ENCODE measurements at regions of chr4 and their contacts with region 1.

Region 1: GRCh38 chr4:173168396-173169177 is at the start of gene GALNT7:
- DNase-seq: no peak
- ATAC-seq: peak; percentile 74
- H3K4me3 ChIP-seq: peak within 1 kb of the TSS; percentile 75 to 78
- H3K27ac ChIP-seq: peak within 1 kb of the TSS; percentile 98
- H3K4me1 ChIP-seq: peaks cover 34% of the 10 kb centered on the region
- H3K27me3 ChIP-seq: no peaks in the 10 kb centered on the region
- CTCF ChIP-seq: no peak
- total RNA-seq, gene GALNT7: 156 TPM

Region 2: DNA sequence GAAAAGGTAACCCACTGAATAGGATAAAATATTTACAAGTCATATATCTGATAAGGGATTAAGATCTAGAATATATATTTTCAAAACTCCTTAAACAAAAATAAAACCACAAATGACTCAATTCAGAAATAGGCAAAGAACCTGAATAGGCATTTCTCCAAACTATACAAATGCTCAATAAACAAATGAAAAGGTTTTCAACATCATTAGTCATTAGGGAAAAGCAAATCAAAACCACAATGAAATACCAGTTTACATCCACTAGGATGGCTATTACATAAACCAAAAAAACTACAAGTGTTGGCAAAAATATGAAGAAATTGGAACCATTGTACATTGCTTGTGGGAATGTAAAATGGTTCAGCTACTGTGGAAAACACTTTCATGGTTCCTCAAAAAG is 167.0 kb before region 1 on chr4:
- CTCF ChIA-PET with region 1: no interaction called
- POLR2A ChIA-PET with region 1: no interaction called
- in situ Hi-C with region 1: no loop called
- intact Hi-C with region 1: no loop called
- DNase-seq: no peak
- ATAC-seq: no peak
- H3K4me3 ChIP-seq: no peak overlapping the region
- H3K27ac ChIP-seq: no peak overlapping the region
- H3K4me1 ChIP-seq: no peaks in the 10 kb centered on the region
- H3K27me3 ChIP-seq: no peaks in the 10 kb centered on the region
- CTCF ChIP-seq: no peak

Region 3: DNA sequence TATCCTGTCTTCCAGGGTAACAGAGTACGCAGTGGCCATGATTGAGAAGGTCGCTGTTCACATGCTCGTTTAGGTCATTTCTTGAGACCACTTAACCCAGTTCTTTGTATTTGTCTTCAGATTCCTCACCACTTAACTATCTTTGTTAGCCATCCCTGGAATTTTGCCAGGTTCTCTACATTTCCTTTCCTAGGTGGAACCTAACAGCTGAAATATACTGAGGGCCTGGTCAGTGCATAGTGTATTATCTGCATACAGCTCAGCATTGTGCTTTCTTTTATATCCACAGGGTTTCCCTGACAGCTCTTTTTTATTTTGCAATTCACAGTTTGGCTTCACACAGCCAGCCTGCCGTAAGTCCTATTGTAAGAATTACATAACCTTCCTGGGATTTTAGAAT is 148.9 kb before region 1 on chr4:
- CTCF ChIA-PET with region 1: no interaction called
- POLR2A ChIA-PET with region 1: interaction called, 5 read pairs
- in situ Hi-C with region 1: no loop called
- intact Hi-C with region 1: loop called (anchors 5 kb)
- DNase-seq: no peak
- ATAC-seq: no peak
- H3K4me3 ChIP-seq: no peak overlapping the region
- H3K27ac ChIP-seq: no peak overlapping the region; the same call in 1 of the 2 replicates
- H3K4me1 ChIP-seq: peaks cover 3% of the 10 kb centered on the region
- H3K27me3 ChIP-seq: no peaks in the 10 kb centered on the region
- CTCF ChIP-seq: no peak

Region 4: GRCh38 chr4:173218411-173219125 is 50.0 kb after region 1 on chr4:
- CTCF ChIA-PET with region 1: no interaction called
- POLR2A ChIA-PET with region 1: interaction called, 7 read pairs
- in situ Hi-C with region 1: no loop called
- intact Hi-C with region 1: loop called (anchors 5 kb)
- DNase-seq: no peak
- ATAC-seq: peak; percentile 95
- H3K4me3 ChIP-seq: no peak overlapping the region
- H3K27ac ChIP-seq: peak overlapping the region; percentile 99
- H3K4me1 ChIP-seq: peaks cover 41% of the 10 kb centered on the region
- H3K27me3 ChIP-seq: no peaks in the 10 kb centered on the region
- CTCF ChIP-seq: no peak

Region 5: GRCh38 chr4:173257732-173258717 is 89.4 kb after region 1 on chr4:
- CTCF ChIA-PET with region 1: interaction called, 5 read pairs
- POLR2A ChIA-PET with region 1: no interaction called
- in situ Hi-C with region 1: loop called (anchors 25 kb)
- intact Hi-C with region 1: no loop called
- DNase-seq: peak; percentile 60
- ATAC-seq: peak; percentile 93
- H3K4me3 ChIP-seq: no peak overlapping the region
- H3K27ac ChIP-seq: peak overlapping the region; percentile 98
- H3K4me1 ChIP-seq: peaks cover 47% of the 10 kb centered on the region
- H3K27me3 ChIP-seq: no peaks in the 10 kb centered on the region
- CTCF ChIP-seq: peak; percentile 80

Region 6: GRCh38 chr4:173288296-173288695 is 119.7 kb after region 1 on chr4:
- CTCF ChIA-PET with region 1: interaction called, 10 read pairs
- POLR2A ChIA-PET with region 1: no interaction called
- in situ Hi-C with region 1: no loop called
- intact Hi-C with region 1: no loop called
- DNase-seq: peak; percentile 15
- ATAC-seq: peak; percentile 73
- H3K4me3 ChIP-seq: no peak overlapping the region
- H3K27ac ChIP-seq: peak overlapping the region; percentile 55; the same call in 1 of the 2 replicates
- H3K4me1 ChIP-seq: peaks cover 18% of the 10 kb centered on the region
- H3K27me3 ChIP-seq: no peaks in the 10 kb centered on the region
- CTCF ChIP-seq: peak; percentile 66

Measured in Panc1 (cell line).